ENCODE measurements at regions of chr1 and their contacts with region 1.

Region 1: DNA sequence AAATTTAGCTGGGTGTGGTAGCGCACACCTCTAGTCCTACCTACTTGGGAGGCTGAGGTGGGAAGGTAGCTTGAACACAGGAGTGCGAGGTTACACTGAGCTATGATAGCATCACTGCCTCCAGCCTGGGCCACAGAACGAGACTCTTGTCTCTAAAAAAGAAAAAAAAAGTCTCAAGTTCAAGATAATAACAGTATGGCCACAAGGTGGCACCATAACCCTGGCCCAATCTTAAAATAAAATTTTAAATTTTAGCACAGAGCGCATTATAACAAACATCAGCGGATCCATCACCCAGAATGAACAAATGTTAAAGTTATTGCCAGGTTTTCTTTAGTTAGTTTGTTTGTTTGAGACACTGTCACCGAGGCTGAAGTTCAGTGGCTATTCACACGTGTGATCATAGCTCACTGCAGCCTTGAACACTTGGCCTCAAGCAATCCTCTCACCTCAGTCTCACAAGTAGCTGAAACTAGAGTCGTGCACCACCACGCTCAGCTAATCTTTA is 2.9 kb upstream of the HTR6 start:
- DNase-seq: peak in 1 of 2 donors; percentile 82
- ATAC-seq: peak in 2 of 3 donors; percentile 35 to 48
- H3K4me3 ChIP-seq: no peak overlapping the region
- H3K4me3 Mint-ChIP-seq: peak overlapping the region; percentile 31
- H3K27ac ChIP-seq: no peak overlapping the region
- H3K27ac Mint-ChIP-seq: no peak overlapping the region
- H3K4me1 ChIP-seq: peaks cover 18% of the 10 kb centered on the region
- H3K4me1 Mint-ChIP-seq: peaks cover 5 to 22% of the 10 kb centered on the region in 2 donors
- H3K27me3 ChIP-seq: peaks cover 9% of the 10 kb centered on the region
- H3K27me3 Mint-ChIP-seq: peaks cover 13 to 29% of the 10 kb centered on the region in 2 donors
- CTCF ChIP-seq: peak; percentile 76

Region 2: DNA sequence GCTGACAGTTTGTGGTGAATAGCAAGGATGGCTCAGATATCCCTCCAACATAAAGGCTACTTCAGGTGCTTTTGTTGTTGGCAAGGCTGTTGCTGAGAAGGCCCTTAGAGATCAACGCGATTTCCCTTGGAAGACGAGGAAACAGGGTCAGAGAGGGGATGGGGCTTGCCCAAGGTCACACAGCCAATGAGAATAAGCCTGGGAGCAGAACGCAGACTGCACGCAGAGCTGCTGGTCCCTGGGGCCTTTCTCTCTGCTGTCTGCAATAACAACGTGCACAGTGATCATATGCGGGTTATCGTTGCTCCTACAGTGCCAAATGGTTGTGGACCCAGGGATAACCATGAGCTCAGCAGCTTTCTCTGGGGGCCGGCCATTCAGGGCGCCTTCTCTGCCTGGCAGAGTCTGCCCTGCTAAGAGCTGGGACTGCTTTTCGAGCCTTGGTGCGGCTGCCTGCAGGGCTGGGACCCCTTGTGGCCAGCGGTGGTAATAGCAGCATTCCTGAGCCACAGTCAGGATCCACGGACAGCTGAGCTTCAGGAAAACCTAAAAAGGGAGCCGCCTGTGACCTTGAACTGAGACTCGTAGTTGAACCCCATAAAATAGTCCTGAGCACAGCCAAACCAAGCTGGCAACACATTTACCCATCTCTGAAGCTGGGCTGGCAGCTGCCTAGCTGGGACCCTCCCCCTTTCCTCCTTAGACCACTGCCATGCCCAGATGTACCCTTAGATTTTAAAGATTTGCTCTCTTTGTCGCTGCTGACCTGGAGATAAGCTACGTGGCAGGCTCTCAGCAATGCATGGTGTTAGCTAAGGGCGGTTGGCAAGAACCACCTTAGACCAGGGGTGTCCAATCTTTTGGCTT is 42.7 kb after region 1 on chr1:
- intact Hi-C with region 1: loop called (anchors 1 kb)
- DNase-seq: peak; percentile 54 to 79
- ATAC-seq: peak; percentile 70 to 91 (median 85)
- H3K4me3 ChIP-seq: no peak overlapping the region
- H3K4me3 Mint-ChIP-seq: no peak overlapping the region
- H3K27ac ChIP-seq: no peak overlapping the region
- H3K27ac Mint-ChIP-seq: no peak overlapping the region
- H3K4me1 ChIP-seq: peaks cover 8% of the 10 kb centered on the region
- H3K4me1 Mint-ChIP-seq: peaks cover 0 to 5% of the 10 kb centered on the region in 2 donors
- H3K27me3 ChIP-seq: no peaks in the 10 kb centered on the region
- H3K27me3 Mint-ChIP-seq: no peaks in the 10 kb centered on the region
- CTCF ChIP-seq: peak; percentile 85

Region 3: DNA sequence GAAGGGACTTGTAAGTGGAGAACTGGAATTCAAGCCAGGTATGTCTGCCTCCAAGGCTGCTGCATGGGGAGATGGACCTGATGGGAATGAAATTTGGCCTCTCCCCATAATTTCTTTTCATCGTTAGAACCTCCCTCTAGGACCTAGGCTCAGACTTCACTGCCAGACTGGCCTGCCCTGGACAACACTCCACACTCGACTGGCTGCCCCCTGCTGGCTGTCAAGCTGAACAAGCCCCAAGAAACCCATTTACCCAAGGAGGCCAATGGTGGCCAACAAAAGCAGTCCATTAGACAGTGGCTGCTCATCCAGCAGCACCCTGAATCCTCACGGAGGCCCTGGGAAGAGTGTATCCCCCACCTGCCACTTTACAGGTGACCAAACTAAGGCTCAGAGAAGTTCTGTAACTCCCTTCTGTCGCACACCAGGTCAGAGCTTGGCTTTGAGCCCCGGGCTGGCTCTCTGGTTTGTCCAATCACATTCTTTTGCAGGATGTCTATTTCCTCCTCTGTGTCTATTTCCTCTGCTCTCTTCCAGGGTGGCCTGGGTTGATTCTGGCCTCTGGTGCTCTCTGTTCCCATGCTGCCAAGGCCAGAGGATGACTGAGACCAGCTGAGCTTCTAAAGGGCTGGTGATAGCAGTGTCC is 149.6 kb after region 1 on chr1:
- intact Hi-C with region 1: loop called (anchors 1 kb)
- DNase-seq: peak; percentile 27 to 64
- ATAC-seq: peak; percentile 37 to 69 (median 65)
- H3K4me3 ChIP-seq: no peak overlapping the region
- H3K4me3 Mint-ChIP-seq: no peak overlapping the region
- H3K27ac ChIP-seq: no peak overlapping the region
- H3K27ac Mint-ChIP-seq: no peak overlapping the region
- H3K4me1 ChIP-seq: no peaks in the 10 kb centered on the region
- H3K4me1 Mint-ChIP-seq: no peaks in the 10 kb centered on the region
- H3K27me3 ChIP-seq: no peaks in the 10 kb centered on the region
- H3K27me3 Mint-ChIP-seq: peaks cover 0 to 9% of the 10 kb centered on the region in 2 donors
- CTCF ChIP-seq: peak; percentile 53